ENCODE measurements at regions of chr15 and their contacts with region 1.

Region 1: DNA sequence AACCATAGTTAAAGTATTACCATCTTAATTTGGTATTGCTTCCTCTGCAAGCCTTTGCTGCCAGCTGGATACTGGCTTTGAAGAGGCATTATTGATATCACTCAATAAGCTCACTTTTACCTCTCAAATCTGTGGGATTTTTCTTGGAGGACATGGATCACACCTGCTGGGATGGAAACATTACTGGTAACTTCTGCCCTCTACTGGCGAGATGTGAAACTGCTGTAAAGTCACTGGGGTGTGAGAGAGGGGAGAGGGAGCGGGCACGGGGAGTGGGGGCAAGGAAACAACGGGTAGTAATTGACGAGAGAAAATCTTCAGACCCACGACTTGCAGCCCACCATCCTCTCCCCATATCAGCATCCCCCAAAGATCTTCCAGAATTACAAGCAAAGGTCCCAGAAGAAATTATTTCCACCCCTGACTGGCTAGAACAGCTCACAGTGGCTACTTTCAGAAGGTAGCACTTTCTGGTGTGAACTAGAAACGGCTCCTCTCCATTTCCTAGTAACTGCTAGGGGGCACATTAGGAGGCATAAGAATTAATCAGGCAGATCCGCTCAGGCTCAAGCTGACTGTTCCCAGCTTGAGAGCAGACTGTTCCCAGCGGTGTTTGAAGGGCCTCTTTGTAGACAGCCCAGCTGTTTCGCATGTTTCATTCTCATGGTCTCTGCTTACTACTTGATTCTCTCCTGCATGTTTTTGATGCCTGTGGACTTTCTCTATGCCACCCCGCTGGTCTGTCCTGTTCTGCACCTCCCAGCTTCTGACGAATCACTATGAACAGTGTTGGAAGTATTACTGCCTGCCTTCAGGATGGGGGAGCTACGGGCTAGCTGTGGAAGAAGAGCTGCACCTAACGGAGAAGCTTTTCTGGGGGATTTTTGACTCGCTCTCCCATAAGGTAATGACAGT is 230.4 kb upstream of the CHRM5 start:
- DNase-seq: peak; percentile 25
- H3K4me3 ChIP-seq: no peak overlapping the region
- H3K27ac ChIP-seq: no peak overlapping the region
- H3K4me1 ChIP-seq: no peaks in the 10 kb centered on the region
- H3K27me3 ChIP-seq: no peaks in the 10 kb centered on the region
- CTCF ChIP-seq: peak in 3 of 4 experiments; percentile 45 to 65 (median 59)
- POLR2A ChIP-seq: no peak

Region 2: DNA sequence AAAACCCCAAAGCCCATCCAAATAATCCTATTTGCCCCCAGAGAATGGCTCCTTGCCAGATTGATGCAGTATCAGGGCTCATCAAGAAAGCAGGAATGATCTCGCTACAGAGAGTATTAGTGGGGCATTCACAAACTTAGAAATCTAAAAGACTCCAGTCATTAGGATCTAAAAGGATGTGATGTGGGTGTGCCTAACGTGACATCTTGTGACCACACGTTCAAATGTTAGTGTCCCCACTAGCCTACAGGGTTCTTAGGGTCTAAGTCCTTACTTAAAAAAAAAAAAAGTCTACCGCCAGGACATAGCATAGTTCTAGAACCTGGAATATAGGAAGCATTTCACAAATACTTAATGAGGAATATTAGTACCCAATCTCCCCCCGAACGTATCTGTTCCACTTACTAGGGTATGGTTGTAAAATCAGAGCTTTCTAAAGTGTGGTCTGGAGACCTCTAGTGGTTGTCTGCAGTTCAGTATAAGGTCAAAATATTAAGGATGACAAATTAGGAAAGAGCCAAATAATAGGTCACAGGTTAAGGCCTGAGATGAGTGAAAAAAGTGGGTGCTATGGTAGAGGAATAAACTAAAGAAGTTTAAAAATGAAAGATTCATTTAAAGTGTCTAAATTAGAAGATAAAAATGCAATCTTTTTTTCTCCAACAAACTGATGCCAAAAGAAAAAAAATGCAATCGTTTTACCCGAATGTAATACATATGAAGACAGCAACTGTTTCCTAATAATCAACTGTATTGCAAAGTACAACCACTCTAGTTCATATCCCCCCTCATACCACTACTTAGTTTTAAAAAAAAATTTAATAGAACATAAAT is 226.1 kb after region 1 on chr15:
- intact Hi-C with region 1: loop called (anchors 10 kb)
- DNase-seq: no peak
- H3K4me3 ChIP-seq: no peak overlapping the region
- H3K27ac ChIP-seq: no peak overlapping the region
- H3K4me1 ChIP-seq: no peaks in the 10 kb centered on the region
- H3K27me3 ChIP-seq: no peaks in the 10 kb centered on the region
- CTCF ChIP-seq: peak in 3 of 4 experiments; percentile 24 to 48 (median 41)
- POLR2A ChIP-seq: no peak

Region 3: GRCh38 chr15:34049112-34049511 is 311.2 kb after region 1 on chr15:
- intact Hi-C with region 1: no loop called
- DNase-seq: no peak
- H3K4me3 ChIP-seq: no peak overlapping the region
- H3K27ac ChIP-seq: no peak overlapping the region
- H3K4me1 ChIP-seq: no peaks in the 10 kb centered on the region
- H3K27me3 ChIP-seq: no peaks in the 10 kb centered on the region
- CTCF ChIP-seq: no peak
- POLR2A ChIP-seq: no peak